Panc1 (cell line): ENCODE measurements at regions of chr18 and their contacts with region 1.

Region 1: DNA sequence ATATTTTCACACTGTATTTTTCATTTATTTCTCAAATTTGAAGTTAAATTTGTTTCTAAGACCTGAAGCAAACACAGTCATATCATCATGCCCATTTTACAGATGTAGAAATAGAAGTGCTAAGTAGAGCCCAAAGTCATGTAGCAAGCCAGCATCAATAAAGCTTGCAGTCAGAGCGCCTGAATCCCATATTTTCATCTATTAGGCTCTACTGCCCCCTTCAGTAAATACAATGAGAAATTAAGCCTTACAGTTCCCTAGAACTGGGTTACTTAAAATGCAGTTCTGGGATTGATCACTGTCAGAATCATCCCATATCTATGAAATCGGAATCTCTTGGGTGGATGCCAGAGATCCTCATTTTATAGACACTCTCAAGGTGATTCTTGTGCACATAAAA is 419.9 kb downstream of the TGIF1 start:
- DNase-seq: peak; percentile 25
- ATAC-seq: peak; percentile 95
- H3K4me3 ChIP-seq: no peak overlapping the region
- H3K27ac ChIP-seq: peak overlapping the region; percentile 74; the same call in 1 of the 2 replicates
- H3K4me1 ChIP-seq: peaks cover 9% of the 10 kb centered on the region
- H3K27me3 ChIP-seq: no peaks in the 10 kb centered on the region; the same call in 1 of the 2 replicates
- CTCF ChIP-seq: peak; percentile 60; the same call in 1 of the 2 replicates

Region 2: DNA sequence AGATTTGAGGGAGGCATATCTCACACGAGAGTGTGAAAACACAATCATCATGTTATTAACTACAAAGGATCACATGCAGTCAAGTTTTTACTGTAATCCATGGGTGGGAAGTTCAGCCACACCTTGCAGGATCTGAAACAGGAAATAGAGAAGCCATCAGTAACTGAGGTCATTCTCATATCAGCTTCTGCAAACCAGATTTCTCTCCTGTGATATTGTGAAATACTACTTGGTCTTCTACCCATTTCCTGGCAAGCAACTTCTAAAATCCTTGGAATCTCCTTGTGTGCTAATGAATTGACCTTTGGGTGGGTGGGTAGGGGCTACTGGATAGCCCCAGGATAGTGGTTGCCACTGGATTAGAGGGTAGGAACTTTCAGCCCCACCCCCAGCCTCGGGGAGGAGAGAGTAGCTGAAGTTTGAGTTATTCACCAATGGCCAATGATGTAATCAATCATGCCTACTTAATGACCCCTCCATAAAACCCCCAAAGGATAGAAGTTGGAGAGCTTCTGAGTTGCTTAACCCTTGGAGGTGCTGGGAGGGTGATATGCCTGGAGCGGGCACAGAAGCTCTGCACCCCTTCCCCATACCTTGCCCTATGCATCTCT is 445.5 kb before region 1 on chr18:
- CTCF ChIA-PET with region 1: no interaction called
- POLR2A ChIA-PET with region 1: interaction called, 10 read pairs
- in situ Hi-C with region 1: no loop called
- intact Hi-C with region 1: no loop called
- DNase-seq: no peak
- ATAC-seq: no peak
- H3K4me3 ChIP-seq: no peak overlapping the region
- H3K27ac ChIP-seq: no peak overlapping the region; the same call in 1 of the 2 replicates
- H3K4me1 ChIP-seq: no peaks in the 10 kb centered on the region
- H3K27me3 ChIP-seq: no peaks in the 10 kb centered on the region
- CTCF ChIP-seq: no peak

Region 3: GRCh38 chr18:3771121-3771971 is 98.5 kb before region 1 on chr18:
- CTCF ChIA-PET with region 1: interaction called, 18 read pairs
- POLR2A ChIA-PET with region 1: no interaction called
- in situ Hi-C with region 1: no loop called
- intact Hi-C with region 1: loop called (anchors 2 kb)
- DNase-seq: peak; percentile 38
- ATAC-seq: peak; percentile 100
- H3K4me3 ChIP-seq: peak overlapping the region; percentile 42 to 51
- H3K27ac ChIP-seq: peak overlapping the region; percentile 81
- H3K4me1 ChIP-seq: peaks cover 24% of the 10 kb centered on the region
- H3K27me3 ChIP-seq: no peaks in the 10 kb centered on the region
- CTCF ChIP-seq: peak; percentile 98